Activated CD4-positive, alpha-beta memory T cell treated with anti-CD3 and anti-CD28 coated beads, Interleukin-2, amount 10 ng/mL, durations not matched to agents 7 days and 5 days (primary cell): ENCODE measurements at regions of chr12 and their contacts with region 1.

Region 1: GRCh38 chr12:103632554-103633216 is 45.6 kb downstream of the STAB2 start:
- DNase-seq: peak; percentile 76
- H3K4me3 Mint-ChIP-seq: no peak overlapping the region
- H3K27ac Mint-ChIP-seq: no peak overlapping the region
- H3K4me1 Mint-ChIP-seq: no peaks in the 10 kb centered on the region
- H3K27me3 Mint-ChIP-seq: no peaks in the 10 kb centered on the region

Region 2: DNA sequence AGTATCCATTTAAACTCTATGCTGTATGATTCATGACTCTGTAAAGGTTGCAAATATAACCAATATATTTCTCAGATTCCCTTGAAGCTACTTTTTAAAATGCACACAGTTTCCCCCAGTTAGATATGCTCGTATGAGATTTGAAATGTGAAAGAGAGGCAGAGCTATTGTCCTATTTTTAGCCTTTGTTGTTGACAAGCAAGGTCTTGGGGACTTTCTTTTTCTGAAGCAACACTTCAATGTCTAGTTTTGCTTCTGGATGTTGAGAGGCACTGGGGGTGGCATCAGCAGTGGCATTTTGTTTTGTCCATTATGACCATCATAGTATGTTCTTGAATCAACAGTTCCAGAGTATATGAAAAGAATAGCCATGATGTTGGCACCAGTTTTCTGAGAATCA is 611.8 kb before region 1 on chr12:
- CTCF ChIA-PET with region 1: no interaction called
- POLR2A ChIA-PET with region 1: no interaction called
- DNase-seq: no peak
- H3K4me3 Mint-ChIP-seq: no peak overlapping the region
- H3K27ac Mint-ChIP-seq: no peak overlapping the region
- H3K4me1 Mint-ChIP-seq: no peaks in the 10 kb centered on the region
- H3K27me3 Mint-ChIP-seq: no peaks in the 10 kb centered on the region

Region 3: DNA sequence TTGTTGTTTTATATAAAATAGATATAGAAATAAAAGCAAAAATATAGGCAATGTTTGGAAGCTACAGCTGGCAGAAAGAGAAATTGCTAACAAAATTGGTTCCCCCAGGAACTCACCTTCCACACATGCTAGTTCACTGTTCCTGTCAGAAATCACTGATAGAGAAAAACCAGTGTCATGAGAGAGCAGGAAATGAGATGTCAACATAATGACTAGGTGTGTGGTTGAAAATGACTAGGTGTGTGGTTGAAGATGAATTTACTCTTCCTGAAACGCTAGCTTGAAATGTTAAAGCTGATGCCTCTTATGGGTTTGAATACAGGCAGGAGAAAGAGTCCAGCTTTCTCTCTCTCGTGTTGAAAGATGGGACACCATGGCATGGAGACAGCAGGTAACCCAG is 353.2 kb before region 1 on chr12:
- CTCF ChIA-PET with region 1: no interaction called
- POLR2A ChIA-PET with region 1: no interaction called
- DNase-seq: no peak
- H3K4me3 Mint-ChIP-seq: no peak overlapping the region
- H3K27ac Mint-ChIP-seq: no peak overlapping the region
- H3K4me1 Mint-ChIP-seq: peaks cover 9% of the 10 kb centered on the region
- H3K27me3 Mint-ChIP-seq: no peaks in the 10 kb centered on the region

Region 4: GRCh38 chr12:103571286-103571685 is 61.4 kb before region 1 on chr12:
- CTCF ChIA-PET with region 1: interaction called, 11 read pairs
- POLR2A ChIA-PET with region 1: no interaction called
- DNase-seq: no peak
- H3K4me3 Mint-ChIP-seq: no peak overlapping the region
- H3K27ac Mint-ChIP-seq: no peak overlapping the region
- H3K4me1 Mint-ChIP-seq: peaks cover 3% of the 10 kb centered on the region
- H3K27me3 Mint-ChIP-seq: peaks cover 68% of the 10 kb centered on the region